ENCODE measurements at regions of chr2 and their contacts with region 1.

Region 1: GRCh38 chr2:31428001-31428418 is 13.5 kb upstream of the XDH start:
- DNase-seq: peak; percentile 56
- H3K4me3 ChIP-seq: no peak overlapping the region
- H3K27ac ChIP-seq: no peak overlapping the region
- H3K4me1 ChIP-seq: peaks cover 35% of the 10 kb centered on the region
- H3K27me3 ChIP-seq: no peaks in the 10 kb centered on the region
- CTCF ChIP-seq: peak; percentile 18 to 42

Region 2: GRCh38 chr2:31138037-31138962 is 289.7 kb before region 1 on chr2 and contains the start of gene GALNT14:
- CTCF ChIA-PET with region 1: no interaction called
- dilution Hi-C with region 1: no loop called
- in situ Hi-C with region 1: no loop called
- intact Hi-C with region 1: loop called (anchors 1 kb)
- DNase-seq: peak; percentile 82
- H3K4me3 ChIP-seq: peak within 1 kb of the TSS; percentile 71 to 88 (median 80)
- H3K27ac ChIP-seq: peak within 1 kb of the TSS; percentile 59
- H3K4me1 ChIP-seq: no peaks in the 10 kb centered on the region
- H3K27me3 ChIP-seq: no peaks in the 10 kb centered on the region
- CTCF ChIP-seq: peak; percentile 52 to 72
- total RNA-seq, gene GALNT14: 12.7 to 29.9 TPM

Region 3: GRCh38 chr2:31233741-31234682 is 194.0 kb before region 1 on chr2 and contains the start of gene EHD3:
- CTCF ChIA-PET with region 1: no interaction called
- dilution Hi-C with region 1: no loop called
- in situ Hi-C with region 1: loop called in 1 of 2 experiments (anchors 25 kb)
- intact Hi-C with region 1: no loop called
- DNase-seq: peak; percentile 85
- H3K4me3 ChIP-seq: peak within 1 kb of the TSS; percentile 48 to 69 (median 49)
- H3K27ac ChIP-seq: no peak within 1 kb of the TSS
- H3K4me1 ChIP-seq: peaks cover 27% of the 10 kb centered on the region
- H3K27me3 ChIP-seq: no peaks in the 10 kb centered on the region
- CTCF ChIP-seq: peak; percentile 64 to 86
- total RNA-seq, gene EHD3: 39.4 to 53.3 TPM

Region 4: DNA sequence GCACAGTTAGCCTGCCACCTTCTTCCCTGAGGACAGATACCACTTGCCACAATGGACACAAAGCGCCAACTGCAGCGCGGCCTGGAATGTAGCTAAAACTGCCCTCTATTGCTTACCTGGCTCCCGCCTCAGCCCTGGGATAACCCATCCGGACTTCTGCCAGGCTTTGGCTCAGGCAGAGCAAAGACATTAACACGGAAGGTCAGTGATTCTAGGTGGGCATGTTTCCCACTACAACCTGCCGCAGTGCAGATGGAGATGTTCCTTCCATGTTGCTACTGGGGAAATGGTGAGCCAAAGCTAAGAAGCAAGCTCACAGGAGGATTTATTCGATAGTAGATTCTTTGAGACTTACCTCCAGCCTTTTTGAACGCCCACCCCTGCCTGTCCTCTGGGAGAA is 88.3 kb before region 1 on chr2:
- CTCF ChIA-PET with region 1: no interaction called
- dilution Hi-C with region 1: loop called (anchors 5 kb)
- in situ Hi-C with region 1: loop called in 1 of 2 experiments (anchors 5 kb)
- intact Hi-C with region 1: loop called (anchors 1 kb)
- DNase-seq: no peak
- H3K4me3 ChIP-seq: no peak overlapping the region
- H3K27ac ChIP-seq: no peak overlapping the region
- H3K4me1 ChIP-seq: peaks cover 41% of the 10 kb centered on the region
- H3K27me3 ChIP-seq: no peaks in the 10 kb centered on the region
- CTCF ChIP-seq: no peak

Region 5: DNA sequence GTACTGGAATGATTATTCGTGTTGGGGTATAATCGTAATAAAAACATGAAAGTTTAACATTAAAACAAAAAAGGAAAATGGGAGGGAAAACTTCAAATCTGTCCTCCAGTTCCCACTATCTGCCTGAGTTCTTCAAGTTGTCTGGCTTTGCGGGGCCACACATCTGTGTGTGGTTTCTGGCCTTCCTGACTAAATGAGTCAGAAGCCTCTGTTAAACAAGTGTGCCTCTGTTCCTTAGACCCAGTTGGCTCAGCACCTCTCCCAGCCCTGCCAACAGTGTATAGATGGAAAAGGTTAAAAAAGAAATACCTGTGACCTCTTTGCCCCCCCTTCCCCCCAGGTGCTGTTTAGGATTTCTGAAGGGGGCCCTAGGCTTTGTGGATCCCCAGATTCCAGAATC is 43.7 kb before region 1 on chr2:
- CTCF ChIA-PET with region 1: no interaction called
- dilution Hi-C with region 1: no loop called
- in situ Hi-C with region 1: no loop called
- intact Hi-C with region 1: loop called (anchors 2 kb)
- DNase-seq: peak; percentile 95
- H3K4me3 ChIP-seq: no peak overlapping the region
- H3K27ac ChIP-seq: peak overlapping the region; percentile 99
- H3K4me1 ChIP-seq: peaks cover 49% of the 10 kb centered on the region
- H3K27me3 ChIP-seq: no peaks in the 10 kb centered on the region
- CTCF ChIP-seq: no peak

Region 6: GRCh38 chr2:31390324-31390723 is 37.7 kb before region 1 on chr2:
- CTCF ChIA-PET with region 1: no interaction called
- dilution Hi-C with region 1: no loop called
- in situ Hi-C with region 1: no loop called
- intact Hi-C with region 1: loop called (anchors 1 kb)
- DNase-seq: peak; percentile 99
- H3K4me3 ChIP-seq: no peak overlapping the region
- H3K27ac ChIP-seq: peak overlapping the region; percentile 90
- H3K4me1 ChIP-seq: peaks cover 36% of the 10 kb centered on the region
- H3K27me3 ChIP-seq: no peaks in the 10 kb centered on the region
- CTCF ChIP-seq: peak in 1 of 2 donors; percentile 16

Region 7: DNA sequence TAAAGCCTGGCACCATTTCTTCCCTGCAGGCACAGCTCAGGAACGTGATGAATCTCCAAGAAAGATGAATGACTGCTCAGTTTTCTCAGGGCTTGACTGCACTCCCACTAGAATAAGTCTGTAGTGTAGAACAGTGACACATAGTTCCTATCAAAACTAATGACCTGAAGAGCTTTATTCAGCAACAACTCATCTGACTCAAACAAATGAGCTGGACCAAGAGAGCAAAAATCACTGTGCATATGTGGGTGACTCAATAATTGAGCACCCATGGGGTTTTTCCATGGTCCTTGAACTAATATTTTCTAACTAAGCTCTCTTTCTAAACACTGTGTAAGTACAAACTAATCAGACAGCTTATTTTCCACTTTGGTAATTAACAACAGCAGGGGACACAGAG is 47.7 kb after region 1 on chr2:
- CTCF ChIA-PET with region 1: no interaction called
- dilution Hi-C with region 1: loop called (anchors 5 kb)
- in situ Hi-C with region 1: no loop called
- intact Hi-C with region 1: no loop called
- DNase-seq: peak; percentile 66
- H3K4me3 ChIP-seq: no peak overlapping the region
- H3K27ac ChIP-seq: no peak overlapping the region
- H3K4me1 ChIP-seq: no peaks in the 10 kb centered on the region
- H3K27me3 ChIP-seq: no peaks in the 10 kb centered on the region
- CTCF ChIP-seq: no peak

Region 8: GRCh38 chr2:32010670-32011484 is 582.9 kb after region 1 on chr2 and contains the start of gene MEMO1:
- CTCF ChIA-PET with region 1: no interaction called
- dilution Hi-C with region 1: no loop called
- in situ Hi-C with region 1: no loop called
- intact Hi-C with region 1: no loop called
- DNase-seq: peak; percentile 93
- H3K4me3 ChIP-seq: peak within 1 kb of the TSS; percentile 86 to 98 (median 96)
- H3K27ac ChIP-seq: peak within 1 kb of the TSS; percentile 47
- H3K4me1 ChIP-seq: peaks cover 11% of the 10 kb centered on the region
- H3K27me3 ChIP-seq: no peaks in the 10 kb centered on the region
- CTCF ChIP-seq: peak in 1 of 2 donors; percentile 20
- total RNA-seq, gene MEMO1: 47.8 to 75.3 TPM